Cardiac septum (tissue), 1 donor: ENCODE measurements at regions of chr10 and their contacts with region 1.

Region 1: GRCh38 chr10:13074561-13075451 is 25.2 kb upstream of the OPTN start:
- DNase-seq: no peak

Region 2: DNA sequence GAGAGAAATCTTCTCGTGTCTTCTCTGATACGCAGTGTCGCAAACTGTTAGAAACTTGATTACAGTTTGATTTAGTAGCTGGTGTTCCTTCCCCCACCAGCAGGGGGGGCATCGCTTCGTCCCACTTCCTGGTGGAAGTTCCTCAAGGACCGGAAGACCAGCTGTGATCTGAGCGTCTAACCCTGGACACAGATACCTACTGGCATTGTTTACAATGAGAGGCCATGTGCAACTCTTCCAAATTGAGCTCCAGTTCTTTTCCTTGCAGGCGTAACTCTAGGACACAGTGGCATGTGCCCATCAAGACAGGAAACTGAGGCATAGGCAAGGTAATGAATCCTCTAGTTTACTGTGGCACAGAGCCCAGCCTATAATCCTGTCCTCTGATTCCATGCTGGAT is 292.3 kb before region 1 on chr10:
- intact Hi-C with region 1: loop called (anchors 10 kb)
- DNase-seq: no peak

Region 3: GRCh38 chr10:12915637-12916168 is 159.1 kb before region 1 on chr10:
- intact Hi-C with region 1: no loop called
- DNase-seq: no peak

Region 4: DNA sequence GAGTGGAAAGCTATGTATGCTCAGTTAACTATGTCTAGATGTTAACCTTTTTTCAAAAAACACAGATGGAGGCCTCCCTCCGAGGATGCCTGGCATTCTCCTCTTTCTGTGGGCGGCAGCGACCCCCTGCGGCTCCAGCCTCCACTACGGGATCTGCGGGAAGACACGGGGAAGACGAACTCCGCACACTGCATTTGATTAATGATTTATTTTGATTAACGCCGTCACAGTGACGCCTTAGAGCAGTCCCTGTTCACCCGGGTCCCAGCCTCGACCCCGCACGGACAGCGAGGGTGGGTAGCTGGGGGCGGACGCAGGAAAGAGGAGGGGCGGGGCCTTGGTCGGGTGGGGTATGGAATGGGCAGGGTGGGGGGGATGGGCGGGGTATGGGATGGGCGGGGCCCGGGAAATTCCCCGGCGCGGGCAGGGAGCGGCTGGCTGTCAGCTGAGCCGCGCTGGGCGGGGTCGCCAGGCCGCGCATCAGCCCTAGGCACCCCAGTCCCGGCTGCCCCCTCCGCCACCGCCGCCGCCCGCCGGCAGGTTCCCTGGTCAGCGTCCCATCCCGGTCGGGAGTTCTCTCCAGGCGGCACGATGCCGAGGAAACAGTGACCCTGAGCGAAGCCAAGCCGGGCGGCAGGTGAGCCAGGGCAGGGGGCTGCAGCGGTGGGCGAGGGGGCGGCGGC is 25.0 kb after region 1 on chr10 and contains the start of gene OPTN:
- intact Hi-C with region 1: no loop called
- DNase-seq: peak; percentile 88
- total RNA-seq, gene OPTN: 126 TPM

Region 5: DNA sequence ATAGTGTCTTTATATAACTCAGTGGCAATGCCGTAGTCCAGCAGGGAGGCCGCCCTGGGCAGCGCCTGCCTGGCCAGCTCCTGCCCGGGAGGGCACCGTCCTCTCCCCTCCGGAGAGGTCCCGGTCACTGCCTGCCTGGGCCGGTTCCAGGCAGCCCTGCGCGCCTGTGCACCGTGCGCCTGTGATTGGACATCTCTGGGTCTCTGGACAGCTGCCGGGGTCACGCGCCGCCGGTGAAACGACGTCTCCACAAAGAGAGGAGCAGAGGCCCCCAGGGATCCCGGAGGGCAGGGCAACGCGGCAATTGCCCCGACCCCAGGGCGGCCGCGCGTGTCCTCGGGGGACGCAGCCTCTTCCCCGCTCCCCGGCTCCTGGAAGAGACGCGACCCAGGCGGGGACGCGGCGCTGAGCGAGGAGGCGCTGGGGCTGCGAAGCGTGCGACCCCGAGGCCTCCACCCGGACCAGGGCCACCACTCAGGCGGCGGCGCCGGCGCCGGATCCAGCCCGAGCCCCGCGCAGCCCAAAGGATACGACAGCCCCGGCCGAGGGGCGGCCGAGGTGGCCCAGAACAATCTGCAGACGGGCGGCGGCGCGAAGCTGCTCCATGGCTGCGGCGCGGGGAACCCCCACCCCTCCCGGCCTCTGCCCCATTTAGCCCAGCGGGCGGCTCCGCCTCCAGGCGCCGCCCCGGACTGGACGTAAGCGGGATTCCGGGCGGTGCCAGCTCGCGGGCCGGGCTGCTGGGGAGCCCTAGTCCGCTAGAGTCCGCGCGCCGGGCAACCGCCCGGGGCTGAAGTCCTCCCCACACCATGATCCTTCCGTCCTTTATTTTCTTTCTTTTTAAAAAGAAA is 224.9 kb after region 1 on chr10 and contains the start of gene PHYH:
- intact Hi-C with region 1: no loop called
- DNase-seq: peak; percentile 95
- total RNA-seq, gene PHYH: 101 TPM